ENCODE measurements at regions of chr2 and their contacts with region 1.

Region 1: DNA sequence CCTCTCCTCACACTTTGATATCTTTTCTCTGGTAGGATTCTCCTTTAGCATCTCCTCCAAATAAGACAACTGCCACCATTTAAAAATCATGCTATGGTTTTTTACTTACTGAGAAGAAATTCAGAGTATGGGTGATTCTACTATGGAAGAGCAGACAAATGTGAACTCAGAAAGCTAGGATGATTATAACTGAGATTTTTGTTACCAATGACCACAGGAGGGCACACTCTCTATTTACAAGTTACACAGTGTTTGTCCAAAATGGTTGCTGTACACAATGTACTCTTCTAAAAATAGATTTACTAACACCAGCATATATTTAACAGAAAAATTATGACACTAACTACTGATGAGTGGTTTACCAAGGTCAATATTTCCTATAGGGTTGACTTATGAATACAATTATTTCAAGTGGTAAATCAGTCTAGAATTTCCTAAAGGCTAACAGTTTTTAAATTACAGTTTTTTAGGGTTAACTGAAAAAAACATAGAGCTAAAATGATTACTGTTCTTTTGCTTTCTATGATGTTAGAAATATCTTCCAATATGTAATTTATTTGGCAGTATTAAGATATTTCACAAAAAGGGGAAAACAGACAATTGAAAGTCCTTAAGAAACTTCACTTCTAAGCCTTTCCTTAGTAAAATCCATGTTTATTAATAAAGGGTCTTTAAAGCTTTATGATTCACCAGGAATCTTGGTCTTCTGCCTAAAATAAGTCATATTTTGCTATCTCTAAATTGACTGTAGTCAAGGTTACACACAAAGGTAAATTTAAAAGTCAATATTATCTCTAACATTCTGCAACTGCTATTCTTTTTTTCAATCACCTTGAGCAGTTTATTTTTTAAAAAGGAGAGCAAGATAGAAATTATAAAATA is 57.2 kb downstream of the MAP4K3 start:
- DNase-seq: peak in 5 of 9 donors; percentile 12 to 22 (median 18)
- ATAC-seq: peak; percentile 72
- H3K4me3 ChIP-seq: no peak overlapping the region
- H3K4me3 Mint-ChIP-seq: no peak overlapping the region
- H3K27ac ChIP-seq: no peak overlapping the region
- H3K27ac Mint-ChIP-seq: no peak overlapping the region
- H3K4me1 ChIP-seq: peaks cover 0 to 6% of the 10 kb centered on the region in 2 donors
- H3K4me1 Mint-ChIP-seq: peaks cover 7 to 36% (median 25%) of the 10 kb centered on the region in 7 donors
- H3K27me3 ChIP-seq: no peaks in the 10 kb centered on the region
- H3K27me3 Mint-ChIP-seq: no peaks in the 10 kb centered on the region

Region 2: DNA sequence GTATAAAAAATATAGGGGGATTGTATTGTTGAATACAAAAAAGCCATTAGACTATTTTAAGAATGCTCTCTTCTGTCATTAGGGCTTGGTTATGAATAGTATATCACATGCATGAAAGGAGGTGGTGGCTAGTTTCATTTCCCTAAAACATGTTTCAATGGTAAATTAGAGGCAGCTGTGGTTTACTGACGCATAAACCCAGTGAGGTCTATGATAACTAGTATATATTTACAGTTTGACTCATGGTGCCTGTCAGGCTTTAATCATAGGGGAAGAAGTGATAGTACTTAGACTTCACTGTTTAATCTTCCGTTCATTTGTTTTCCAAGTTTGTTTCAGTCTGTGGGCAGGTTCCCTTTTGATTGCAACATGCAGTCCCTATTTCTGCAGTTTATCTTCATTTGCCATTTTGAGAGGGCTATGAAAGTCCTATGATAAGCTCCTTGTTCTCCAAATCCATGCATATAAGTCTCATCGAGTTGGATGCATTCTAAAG is 112.3 kb after region 1 on chr2:
- CTCF ChIA-PET with region 1: no interaction called
- POLR2A ChIA-PET with region 1: no interaction called
- intact Hi-C with region 1: loop called in 1 of 2 experiments (anchors 1 kb)
- DNase-seq: no peak
- ATAC-seq: peak; percentile 90
- H3K4me3 ChIP-seq: no peak overlapping the region
- H3K4me3 Mint-ChIP-seq: peak overlapping the region in 1 of 10 donors; percentile 45
- H3K27ac ChIP-seq: no peak overlapping the region
- H3K27ac Mint-ChIP-seq: peak overlapping the region in 1 of 9 donors; percentile 66
- H3K4me1 ChIP-seq: no peaks in the 10 kb centered on the region
- H3K4me1 Mint-ChIP-seq: peaks cover 0 to 25% (median 0%) of the 10 kb centered on the region in 7 donors
- H3K27me3 ChIP-seq: no peaks in the 10 kb centered on the region
- H3K27me3 Mint-ChIP-seq: peaks cover 0 to 4% (median 0%) of the 10 kb centered on the region in 5 donors

Region 3: DNA sequence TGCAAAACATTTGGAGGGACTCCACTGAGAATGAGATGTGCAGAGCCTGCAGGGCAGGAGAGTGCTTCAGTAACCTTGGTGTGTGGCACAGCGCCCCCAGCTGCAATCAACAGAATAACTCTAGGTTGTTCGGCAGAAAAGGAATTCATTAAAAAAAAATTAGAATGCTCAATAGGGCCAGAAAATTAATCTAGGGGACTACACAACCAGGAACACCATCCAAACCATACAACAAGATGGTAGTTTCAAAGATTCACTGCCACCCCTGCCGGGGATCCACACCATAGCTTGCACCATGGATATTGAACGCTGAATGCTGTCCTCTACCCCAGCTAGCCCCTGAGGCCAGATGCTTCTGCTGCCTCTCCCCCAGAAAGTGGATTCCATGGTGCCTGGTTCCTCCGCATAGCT is 349.1 kb after region 1 on chr2:
- CTCF ChIA-PET with region 1: no interaction called
- POLR2A ChIA-PET with region 1: no interaction called
- intact Hi-C with region 1: loop called in 1 of 2 experiments (anchors 1 kb)
- DNase-seq: no peak
- ATAC-seq: peak; percentile 60
- H3K4me3 ChIP-seq: no peak overlapping the region
- H3K4me3 Mint-ChIP-seq: no peak overlapping the region
- H3K27ac ChIP-seq: no peak overlapping the region
- H3K27ac Mint-ChIP-seq: no peak overlapping the region
- H3K4me1 ChIP-seq: no peaks in the 10 kb centered on the region
- H3K4me1 Mint-ChIP-seq: peaks cover 0 to 10% (median 0%) of the 10 kb centered on the region in 7 donors
- H3K27me3 ChIP-seq: no peaks in the 10 kb centered on the region
- H3K27me3 Mint-ChIP-seq: no peaks in the 10 kb centered on the region

Measured in naive thymus-derived CD4-positive, alpha-beta T cell (primary cell).